Activated CD4-positive, alpha-beta T cell treated with anti-CD3 and anti-CD28 coated beads, Interleukin-2, amount 10 ng/mL, durations not matched to agents 24 days and 14 days (primary cell): ENCODE measurements at regions of chr11 and their contacts with region 1.

Region 1: GRCh38 chr11:123381817-123382554 is 48.1 kb upstream of the GRAMD1B start:
- DNase-seq: peak; percentile 89
- H3K4me3 Mint-ChIP-seq: peak overlapping the region; percentile 52
- H3K27ac Mint-ChIP-seq: no peak overlapping the region
- H3K4me1 Mint-ChIP-seq: peaks cover 42% of the 10 kb centered on the region
- H3K27me3 Mint-ChIP-seq: no peaks in the 10 kb centered on the region

Region 2: GRCh38 chr11:122954455-122954854 is 427.5 kb before region 1 on chr11:
- intact Hi-C with region 1: no loop called
- DNase-seq: no peak
- H3K4me3 Mint-ChIP-seq: no peak overlapping the region
- H3K27ac Mint-ChIP-seq: no peak overlapping the region
- H3K4me1 Mint-ChIP-seq: no peaks in the 10 kb centered on the region
- H3K27me3 Mint-ChIP-seq: peaks cover 8% of the 10 kb centered on the region

Region 3: GRCh38 chr11:123062158-123062891 is 319.7 kb before region 1 on chr11:
- intact Hi-C with region 1: loop called (anchors 1 kb)
- DNase-seq: peak; percentile 100
- H3K4me3 Mint-ChIP-seq: peak overlapping the region; percentile 100
- H3K27ac Mint-ChIP-seq: peak overlapping the region; percentile 99
- H3K4me1 Mint-ChIP-seq: peaks cover 46% of the 10 kb centered on the region
- H3K27me3 Mint-ChIP-seq: peaks cover 1% of the 10 kb centered on the region

Region 4: DNA sequence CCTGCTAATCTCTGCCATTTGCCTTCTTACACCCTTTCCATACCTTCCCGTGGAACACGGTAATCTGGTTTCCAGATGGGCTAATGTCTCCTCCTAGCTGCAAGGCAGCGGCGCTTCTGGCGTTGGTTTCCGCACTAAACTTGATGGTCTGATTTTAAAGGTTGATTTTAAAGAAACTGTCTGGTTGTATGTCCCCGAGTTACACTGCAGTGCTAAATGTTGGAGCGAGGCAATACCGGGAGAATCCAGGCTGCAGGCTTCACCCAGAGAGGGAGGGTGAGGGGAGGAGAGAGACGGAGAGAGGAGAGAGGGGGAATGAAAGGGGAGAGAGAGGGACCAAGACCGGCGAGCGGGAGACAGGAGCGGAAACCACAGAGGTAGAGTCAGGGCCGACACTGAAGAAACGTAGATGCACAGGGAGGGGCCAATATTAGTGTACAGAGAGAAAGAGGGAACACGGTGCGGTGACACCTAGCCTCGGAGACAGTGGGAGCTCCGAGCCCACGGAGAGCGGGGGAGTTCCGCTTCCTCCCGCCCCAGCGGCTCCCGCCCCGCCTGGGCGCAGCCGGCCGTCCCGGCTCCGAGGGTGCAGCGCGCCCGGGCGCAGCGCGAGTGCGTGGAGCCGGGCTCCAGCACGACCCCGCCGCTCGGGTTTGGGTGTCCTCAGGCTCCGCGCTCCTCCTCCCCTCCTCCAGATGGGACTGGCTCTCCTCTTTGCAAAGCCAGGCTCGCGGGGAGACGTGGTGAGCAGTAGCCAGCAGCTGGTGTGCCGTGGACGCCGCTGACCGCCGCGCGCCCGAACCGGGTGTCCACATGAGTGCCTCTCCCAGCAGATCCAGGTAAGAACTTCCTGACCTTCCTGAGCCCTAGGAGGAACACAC is 23.8 kb before region 1 on chr11:
- intact Hi-C with region 1: loop called (anchors 1 kb)
- DNase-seq: peak; percentile 88
- H3K4me3 Mint-ChIP-seq: peak overlapping the region; percentile 98
- H3K27ac Mint-ChIP-seq: peak overlapping the region; percentile 98
- H3K4me1 Mint-ChIP-seq: peaks cover 62% of the 10 kb centered on the region
- H3K27me3 Mint-ChIP-seq: no peaks in the 10 kb centered on the region

Region 5: GRCh38 chr11:123429913-123430720 is 48.1 kb after region 1 on chr11 and contains the start of gene GRAMD1B:
- intact Hi-C with region 1: loop called (anchors 1 kb)
- DNase-seq: peak; percentile 96
- H3K4me3 Mint-ChIP-seq: peak within 1 kb of the TSS; percentile 87
- H3K27ac Mint-ChIP-seq: peak within 1 kb of the TSS; percentile 90
- H3K4me1 Mint-ChIP-seq: peaks cover 55% of the 10 kb centered on the region
- H3K27me3 Mint-ChIP-seq: no peaks in the 10 kb centered on the region
- total RNA-seq, gene GRAMD1B: 117 TPM in 2 replicates

Region 6: GRCh38 chr11:123478352-123478987 is 96.5 kb after region 1 on chr11:
- intact Hi-C with region 1: loop called (anchors 1 kb)
- DNase-seq: peak; percentile 81
- H3K4me3 Mint-ChIP-seq: peak overlapping the region; percentile 43
- H3K27ac Mint-ChIP-seq: peak overlapping the region; percentile 78
- H3K4me1 Mint-ChIP-seq: peaks cover 55% of the 10 kb centered on the region
- H3K27me3 Mint-ChIP-seq: no peaks in the 10 kb centered on the region